IMR-90 (cell line): ENCODE measurements at regions of chr13 and their contacts with region 1.

Region 1: DNA sequence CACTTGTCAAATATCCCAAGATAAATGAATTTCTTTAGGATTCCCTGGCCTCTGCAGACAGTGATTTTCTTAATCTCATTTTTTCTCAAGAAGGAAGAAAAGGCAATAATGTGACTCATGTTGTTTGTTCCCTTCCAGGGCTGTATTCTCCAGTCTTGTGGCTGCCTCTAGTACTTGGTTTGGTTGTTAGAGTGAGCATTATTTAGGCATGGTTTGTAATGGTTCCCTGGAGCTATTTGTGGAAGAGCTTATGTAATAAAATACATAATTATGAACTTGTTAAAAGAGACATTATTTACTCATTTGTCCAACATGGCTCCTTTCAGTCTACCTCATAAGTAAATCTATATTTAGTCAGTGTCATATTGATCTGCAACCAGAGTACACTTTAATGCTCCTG is 270.4 kb downstream of the DCT start:
- DNase-seq: no peak
- ATAC-seq: no peak
- H3K4me3 ChIP-seq: no peak overlapping the region
- H3K27ac ChIP-seq: no peak overlapping the region
- H3K4me1 ChIP-seq: no peaks in the 10 kb centered on the region
- H3K27me3 ChIP-seq: no peaks in the 10 kb centered on the region
- CTCF ChIP-seq: no peak
- POLR2A ChIP-seq: no peak
- RAD21 ChIP-seq: no peak

Region 2: GRCh38 chr13:93476175-93476574 is 732.9 kb before region 1 on chr13:
- CTCF ChIA-PET with region 1: no interaction called
- POLR2A ChIA-PET with region 1: no interaction called
- dilution Hi-C with region 1: no loop called
- in situ Hi-C with region 1: no loop called
- intact Hi-C with region 1: no loop called
- DNase-seq: peak; percentile 91
- ATAC-seq: peak; percentile 59
- H3K4me3 ChIP-seq: no peak overlapping the region
- H3K27ac ChIP-seq: no peak overlapping the region
- H3K4me1 ChIP-seq: peaks cover 14% of the 10 kb centered on the region
- H3K27me3 ChIP-seq: no peaks in the 10 kb centered on the region
- CTCF ChIP-seq: no peak
- POLR2A ChIP-seq: no peak
- RAD21 ChIP-seq: no peak

Region 3: GRCh38 chr13:94009701-94010100 is 199.4 kb before region 1 on chr13:
- CTCF ChIA-PET with region 1: no interaction called
- POLR2A ChIA-PET with region 1: no interaction called
- dilution Hi-C with region 1: no loop called
- in situ Hi-C with region 1: no loop called
- intact Hi-C with region 1: no loop called
- DNase-seq: peak; percentile 64
- ATAC-seq: peak; percentile 71
- H3K4me3 ChIP-seq: no peak overlapping the region
- H3K27ac ChIP-seq: no peak overlapping the region
- H3K4me1 ChIP-seq: 0 out of 2 replicates have a peak, but pooled peaks cover 2% of the 10 kb centered on the region
- H3K27me3 ChIP-seq: no peaks in the 10 kb centered on the region
- CTCF ChIP-seq: no peak
- POLR2A ChIP-seq: no peak
- RAD21 ChIP-seq: no peak

Region 4: GRCh38 chr13:94073007-94073756 is 135.9 kb before region 1 on chr13:
- CTCF ChIA-PET with region 1: no interaction called
- POLR2A ChIA-PET with region 1: no interaction called
- dilution Hi-C with region 1: no loop called
- in situ Hi-C with region 1: no loop called
- intact Hi-C with region 1: no loop called
- DNase-seq: peak; percentile 91
- ATAC-seq: peak; percentile 97
- H3K4me3 ChIP-seq: no peak overlapping the region
- H3K27ac ChIP-seq: no peak overlapping the region
- H3K4me1 ChIP-seq: peaks cover 8% of the 10 kb centered on the region
- H3K27me3 ChIP-seq: no peaks in the 10 kb centered on the region
- CTCF ChIP-seq: no peak
- POLR2A ChIP-seq: no peak
- RAD21 ChIP-seq: no peak

Region 5: DNA sequence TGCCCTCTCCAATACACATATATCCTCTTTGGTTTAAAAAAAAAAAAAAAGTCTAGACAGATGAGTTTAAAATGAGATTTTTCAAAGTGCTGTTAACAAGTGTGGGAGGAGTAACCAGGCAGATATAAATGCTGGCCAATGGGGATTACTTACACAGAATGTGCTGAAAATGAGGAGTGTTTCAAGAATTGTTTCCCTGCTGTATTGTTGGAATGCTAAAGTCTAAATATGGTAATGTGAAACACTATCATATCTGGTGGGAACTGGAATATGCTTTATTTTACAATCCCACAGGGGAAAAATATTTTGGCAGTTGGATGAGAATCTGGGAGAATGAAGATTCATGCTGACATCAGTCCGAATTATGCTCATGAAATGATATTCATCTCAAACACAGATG is 19.6 kb after region 1 on chr13:
- CTCF ChIA-PET with region 1: no interaction called
- POLR2A ChIA-PET with region 1: interaction called, 10 read pairs
- dilution Hi-C with region 1: no loop called
- in situ Hi-C with region 1: no loop called
- intact Hi-C with region 1: no loop called
- DNase-seq: peak; percentile 25
- ATAC-seq: no peak
- H3K4me3 ChIP-seq: no peak overlapping the region
- H3K27ac ChIP-seq: no peak overlapping the region
- H3K4me1 ChIP-seq: no peaks in the 10 kb centered on the region; the same call in 1 of the 2 replicates
- H3K27me3 ChIP-seq: no peaks in the 10 kb centered on the region
- CTCF ChIP-seq: no peak
- POLR2A ChIP-seq: no peak
- RAD21 ChIP-seq: no peak

Region 6: GRCh38 chr13:94329754-94330551 is 120.8 kb after region 1 on chr13:
- CTCF ChIA-PET with region 1: no interaction called
- POLR2A ChIA-PET with region 1: no interaction called
- dilution Hi-C with region 1: no loop called
- in situ Hi-C with region 1: no loop called
- intact Hi-C with region 1: loop called (anchors 10 kb)
- DNase-seq: peak; percentile 95
- ATAC-seq: peak; percentile 77
- H3K4me3 ChIP-seq: no peak overlapping the region
- H3K27ac ChIP-seq: peak overlapping the region; percentile 33; the same call in 1 of the 2 replicates
- H3K4me1 ChIP-seq: peaks cover 33% of the 10 kb centered on the region
- H3K27me3 ChIP-seq: no peaks in the 10 kb centered on the region
- CTCF ChIP-seq: no peak
- POLR2A ChIP-seq: no peak
- RAD21 ChIP-seq: 0 out of 2 replicates have a peak, but pooled peaks have one; percentile 8